Activated naive CD4-positive, alpha-beta T cell treated with anti-CD3 and anti-CD28 coated beads for 36 hours (primary cell): ENCODE measurements at regions of chr16 and their contacts with region 1.

Region 1: GRCh38 chr16:22077700-22078313 is 14.5 kb upstream of the VWA3A start:
- DNase-seq: peak; percentile 87
- H3K4me3 Mint-ChIP-seq: no peak overlapping the region
- H3K27ac Mint-ChIP-seq: no peak overlapping the region
- H3K4me1 Mint-ChIP-seq: peaks cover 7% of the 10 kb centered on the region
- H3K27me3 Mint-ChIP-seq: no peaks in the 10 kb centered on the region

Region 2: DNA sequence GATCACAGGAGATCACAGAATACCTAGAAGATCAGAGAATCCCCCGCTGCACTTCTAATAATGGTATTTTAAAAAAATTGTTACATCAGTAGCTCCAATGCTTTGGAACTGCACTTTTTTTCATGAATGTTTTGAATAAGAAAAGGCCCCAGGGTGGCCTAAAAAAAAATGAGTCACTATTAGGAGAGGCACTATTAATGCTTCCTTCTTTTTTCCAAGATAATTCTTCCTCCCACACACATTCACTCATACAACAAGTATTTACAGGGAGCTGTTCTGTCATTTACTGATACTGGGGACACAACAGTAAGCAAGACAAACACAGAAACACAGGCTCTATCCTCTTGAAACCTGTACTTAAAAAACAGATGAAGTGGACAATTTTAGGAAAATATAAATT is 76.2 kb before region 1 on chr16:
- CTCF ChIA-PET with region 1: interaction called, 308 read pairs
- intact Hi-C with region 1: loop called (anchors 1 kb)
- DNase-seq: no peak
- H3K4me3 Mint-ChIP-seq: no peak overlapping the region
- H3K27ac Mint-ChIP-seq: no peak overlapping the region
- H3K4me1 Mint-ChIP-seq: peaks cover 7% of the 10 kb centered on the region
- H3K27me3 Mint-ChIP-seq: no peaks in the 10 kb centered on the region

Region 3: DNA sequence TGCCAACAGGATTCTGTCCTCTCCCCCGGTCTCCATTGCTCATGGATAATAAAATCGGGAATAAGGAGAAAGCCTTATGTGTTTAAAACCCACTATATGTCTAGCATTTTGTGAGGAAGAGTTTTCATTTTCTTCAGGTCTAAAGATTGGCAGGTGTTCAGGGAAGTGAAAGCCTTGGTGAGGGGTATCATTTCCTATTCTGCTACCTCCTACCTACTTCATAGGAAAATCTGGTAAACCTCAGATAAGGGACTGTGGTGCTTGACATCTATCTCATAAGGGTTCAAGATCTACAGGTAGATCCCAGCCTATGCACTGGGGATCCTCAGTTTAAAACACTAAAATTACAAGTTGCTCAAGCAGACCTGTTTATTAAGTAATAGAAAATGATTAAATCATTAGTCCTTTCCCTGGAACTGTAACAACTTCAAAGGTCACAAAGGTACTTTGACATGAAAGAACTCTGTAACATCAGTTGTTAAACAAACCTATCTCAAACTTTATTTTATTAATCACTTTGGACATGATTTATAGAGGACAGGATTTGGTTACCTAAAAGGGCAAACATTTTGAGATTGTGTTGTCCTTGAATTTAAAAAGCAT is 63.4 kb before region 1 on chr16:
- CTCF ChIA-PET with region 1: interaction called, 308 read pairs
- intact Hi-C with region 1: no loop called
- DNase-seq: no peak
- H3K4me3 Mint-ChIP-seq: no peak overlapping the region
- H3K27ac Mint-ChIP-seq: no peak overlapping the region
- H3K4me1 Mint-ChIP-seq: peaks cover 78% of the 10 kb centered on the region
- H3K27me3 Mint-ChIP-seq: no peaks in the 10 kb centered on the region

Region 4: DNA sequence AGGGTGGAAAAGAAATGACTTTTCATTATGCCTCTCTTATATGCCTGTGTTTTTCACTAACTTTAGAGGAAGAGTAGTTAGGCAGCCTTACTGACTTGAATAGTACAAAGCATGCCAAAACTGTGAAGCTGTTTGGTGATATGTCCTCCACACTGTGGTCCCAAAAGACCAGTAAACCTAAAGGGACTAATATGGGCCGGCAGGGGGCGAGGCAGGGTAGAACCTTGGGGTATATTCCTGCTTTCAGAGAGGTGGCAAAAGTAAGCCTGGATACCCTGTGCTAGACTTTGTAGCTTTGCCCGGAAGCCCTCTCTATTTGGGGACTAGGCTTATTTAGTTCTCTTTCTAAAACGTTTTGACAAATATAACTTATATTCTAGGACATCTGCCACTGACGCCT is 21.9 kb before region 1 on chr16:
- CTCF ChIA-PET with region 1: interaction called, 26 read pairs
- intact Hi-C with region 1: no loop called
- DNase-seq: no peak
- H3K4me3 Mint-ChIP-seq: no peak overlapping the region
- H3K27ac Mint-ChIP-seq: no peak overlapping the region
- H3K4me1 Mint-ChIP-seq: peaks cover 50% of the 10 kb centered on the region
- H3K27me3 Mint-ChIP-seq: no peaks in the 10 kb centered on the region

Region 5: DNA sequence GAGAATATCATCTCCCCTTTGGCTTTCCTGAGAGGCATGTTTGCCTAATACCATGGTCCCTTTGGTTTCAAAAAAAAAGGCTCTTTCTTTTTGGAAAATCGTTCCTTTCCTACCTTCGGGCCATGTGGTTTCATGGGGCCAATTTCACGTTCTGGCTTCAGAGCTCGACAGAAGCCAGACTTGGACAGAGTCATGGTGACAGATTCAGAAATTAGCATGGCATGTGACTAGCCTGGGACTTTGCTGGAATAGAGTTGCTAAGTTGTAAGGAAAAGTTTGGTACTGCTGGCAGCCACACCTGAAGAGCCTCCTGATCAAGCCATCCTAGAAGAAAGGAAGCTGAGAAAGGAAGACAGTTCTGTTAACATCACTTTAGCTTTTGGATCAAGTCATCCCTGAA is 12.1 kb after region 1 on chr16:
- CTCF ChIA-PET with region 1: interaction called, 12 read pairs
- intact Hi-C with region 1: no loop called
- DNase-seq: no peak
- H3K4me3 Mint-ChIP-seq: no peak overlapping the region
- H3K27ac Mint-ChIP-seq: no peak overlapping the region
- H3K4me1 Mint-ChIP-seq: no peaks in the 10 kb centered on the region
- H3K27me3 Mint-ChIP-seq: no peaks in the 10 kb centered on the region